Pancreas (tissue), 10 donors: ENCODE measurements at regions of chr6 and their contacts with region 1.

Region 1: GRCh38 chr6:47535316-47536225 is 58.0 kb downstream of the CD2AP start:
- DNase-seq: no peak
- ATAC-seq: no peak
- H3K4me3 ChIP-seq: no peak overlapping the region
- H3K27ac ChIP-seq: no peak overlapping the region
- H3K4me1 ChIP-seq: peaks cover 0 to 5% (median 3%) of the 10 kb centered on the region in 3 donors
- H3K27me3 ChIP-seq: no peaks in the 10 kb centered on the region
- CTCF ChIP-seq: no peak

Region 2: DNA sequence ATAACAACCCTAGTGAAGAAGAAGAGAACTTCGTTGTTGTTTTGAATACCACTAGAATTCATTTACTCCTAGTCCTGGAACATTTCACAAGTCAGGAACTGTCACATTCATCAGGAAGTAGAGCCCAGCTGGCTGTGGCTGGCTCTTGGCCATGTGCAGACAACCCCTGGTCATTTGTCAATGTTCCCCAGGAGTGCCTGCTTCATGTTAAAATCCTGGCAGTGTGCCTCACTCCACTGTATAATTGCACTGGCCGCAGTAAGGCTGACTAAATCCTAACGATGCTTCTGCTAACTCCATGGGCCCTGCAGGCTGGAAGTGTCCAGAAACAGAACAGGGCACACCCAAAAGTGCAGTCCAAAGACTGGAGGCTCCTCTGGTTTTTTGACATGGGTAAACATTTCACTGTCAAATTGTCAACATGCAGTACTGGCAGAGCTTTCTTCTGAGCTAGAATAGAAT is 452.0 kb before region 1 on chr6:
- intact Hi-C with region 1: no loop called
- DNase-seq: peak; percentile 77 to 90 (median 84)
- ATAC-seq: peak; percentile 95 to 98 (median 96)
- H3K4me3 ChIP-seq: no peak overlapping the region
- H3K27ac ChIP-seq: peak overlapping the region in 3 of 4 donors; percentile 16 to 48 (median 19)
- H3K4me1 ChIP-seq: peaks cover 0 to 5% (median 4%) of the 10 kb centered on the region in 3 donors
- H3K27me3 ChIP-seq: no peaks in the 10 kb centered on the region
- CTCF ChIP-seq: no peak

Region 3: GRCh38 chr6:47495954-47496545 is 39.5 kb before region 1 on chr6:
- intact Hi-C with region 1: loop called in 1 of 3 experiments (anchors 5 kb)
- DNase-seq: no peak
- ATAC-seq: peak in 1 of 4 donors; percentile 40
- H3K4me3 ChIP-seq: no peak overlapping the region
- H3K27ac ChIP-seq: no peak overlapping the region
- H3K4me1 ChIP-seq: peaks cover 0 to 38% (median 17%) of the 10 kb centered on the region in 3 donors
- H3K27me3 ChIP-seq: no peaks in the 10 kb centered on the region
- CTCF ChIP-seq: no peak